ENCODE measurements at regions of chr13 and their contacts with region 1.

Region 1: DNA sequence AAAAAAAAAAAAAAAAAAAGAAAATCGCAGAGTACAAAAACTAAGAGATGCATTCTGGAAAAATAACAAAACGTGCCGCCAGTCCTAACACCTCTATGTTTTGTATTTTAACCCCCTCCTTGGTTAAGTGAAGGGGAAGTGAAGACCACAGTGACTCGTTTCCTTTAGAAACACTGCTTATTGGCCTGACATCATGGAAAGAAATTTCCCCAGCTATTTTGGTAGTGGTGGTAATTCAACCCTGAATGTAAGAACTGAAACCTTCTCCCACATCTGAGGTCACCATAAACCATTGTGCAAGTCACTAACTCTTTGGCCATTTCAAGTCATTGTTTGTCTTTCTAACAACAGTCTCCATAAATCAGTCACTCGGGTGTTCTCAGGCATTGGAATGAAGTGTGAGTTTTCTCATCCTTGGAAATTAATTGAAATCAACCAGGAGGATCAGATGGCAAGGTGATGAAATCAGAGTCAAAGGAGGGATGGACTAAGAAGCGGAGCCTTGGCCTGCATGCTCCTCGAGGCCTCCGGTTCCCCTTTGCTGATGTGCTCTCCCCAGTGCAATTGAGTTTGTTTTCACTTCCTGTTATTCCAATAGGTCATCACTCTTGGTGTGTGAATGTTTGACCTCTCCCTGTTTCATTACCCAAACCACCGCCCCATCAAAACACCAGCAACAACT is 443.9 kb downstream of the FGF9 start:
- DNase-seq: peak; percentile 30
- H3K4me3 Mint-ChIP-seq: no peak overlapping the region
- H3K27ac Mint-ChIP-seq: peak overlapping the region; percentile 47
- H3K4me1 Mint-ChIP-seq: peaks cover 25% of the 10 kb centered on the region
- H3K27me3 Mint-ChIP-seq: no peaks in the 10 kb centered on the region

Region 2: DNA sequence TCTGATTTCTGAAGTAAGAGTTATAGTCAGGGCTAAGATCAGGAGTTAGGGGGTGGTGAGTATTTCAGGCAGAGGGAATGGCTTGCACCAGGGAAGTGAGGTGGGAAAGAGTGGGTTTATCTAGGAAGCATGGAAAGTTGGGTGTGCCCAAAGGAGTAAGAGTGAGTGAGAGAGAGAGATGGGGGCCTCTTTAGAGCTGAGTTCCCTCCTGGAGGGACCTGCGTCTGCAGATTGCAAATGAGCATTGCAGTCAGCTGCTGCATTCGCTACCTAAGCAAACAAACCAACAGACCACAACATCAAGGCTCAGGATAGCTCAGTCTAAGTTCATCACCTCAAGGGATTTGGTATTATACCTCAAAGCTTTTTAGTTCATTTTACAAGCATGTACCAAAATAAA is 38.1 kb before region 1 on chr13:
- CTCF ChIA-PET with region 1: no interaction called
- intact Hi-C with region 1: loop called (anchors 5 kb)
- DNase-seq: no peak
- H3K4me3 Mint-ChIP-seq: no peak overlapping the region
- H3K27ac Mint-ChIP-seq: no peak overlapping the region
- H3K4me1 Mint-ChIP-seq: peaks cover 29% of the 10 kb centered on the region
- H3K27me3 Mint-ChIP-seq: no peaks in the 10 kb centered on the region

Region 3: GRCh38 chr13:22161871-22162270 is 47.1 kb after region 1 on chr13:
- CTCF ChIA-PET with region 1: no interaction called
- intact Hi-C with region 1: loop called (anchors 1 kb)
- DNase-seq: no peak
- H3K4me3 Mint-ChIP-seq: no peak overlapping the region
- H3K27ac Mint-ChIP-seq: no peak overlapping the region
- H3K4me1 Mint-ChIP-seq: peaks cover 25% of the 10 kb centered on the region
- H3K27me3 Mint-ChIP-seq: no peaks in the 10 kb centered on the region

Region 4: DNA sequence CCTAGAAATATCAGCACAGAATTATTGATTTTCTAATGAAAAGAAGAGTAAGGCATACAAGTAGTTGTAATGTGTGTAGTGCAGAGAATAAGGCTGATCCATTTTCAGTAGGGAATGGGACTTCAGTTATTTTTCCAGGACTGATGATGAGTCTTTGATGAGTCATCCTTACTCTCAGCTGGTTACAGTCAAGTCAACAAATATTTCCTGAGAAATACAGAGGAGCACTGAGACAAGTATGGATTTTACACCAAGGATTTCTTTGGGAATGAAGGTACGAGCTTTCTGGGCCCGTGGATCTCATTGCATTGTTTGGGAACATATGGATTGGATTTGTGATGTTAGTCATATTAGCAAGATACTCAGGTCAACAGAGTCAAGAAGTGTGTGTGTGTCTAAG is 58.8 kb after region 1 on chr13:
- CTCF ChIA-PET with region 1: no interaction called
- intact Hi-C with region 1: no loop called
- DNase-seq: no peak
- H3K4me3 Mint-ChIP-seq: no peak overlapping the region
- H3K27ac Mint-ChIP-seq: no peak overlapping the region
- H3K4me1 Mint-ChIP-seq: peaks cover 4% of the 10 kb centered on the region
- H3K27me3 Mint-ChIP-seq: peaks cover 2% of the 10 kb centered on the region